Caco-2 (cell line): ENCODE measurements at regions of chr17 and their contacts with region 1.

Region 1: DNA sequence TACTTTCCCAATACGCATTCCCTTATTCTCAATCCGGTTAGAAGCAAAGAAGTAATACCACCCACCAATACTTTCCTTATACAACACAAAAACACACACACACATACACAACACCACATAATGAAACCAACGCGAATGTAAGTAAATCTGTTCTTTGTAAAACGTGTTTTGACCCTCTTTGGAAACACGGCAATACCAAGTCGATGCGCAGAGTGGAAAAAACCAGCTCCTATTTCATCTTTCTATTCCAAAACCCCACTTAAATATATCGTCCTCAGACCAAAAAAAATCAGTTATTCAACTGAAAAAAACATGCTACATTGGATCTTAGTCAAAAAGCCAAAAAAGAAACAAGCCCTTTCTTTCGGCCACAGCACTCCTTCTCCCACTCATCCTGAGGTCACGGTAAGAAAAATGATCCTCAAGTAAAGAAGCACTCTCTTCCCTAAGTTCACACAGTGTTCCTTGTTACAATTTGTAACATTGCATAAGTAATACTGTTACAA is 31.0 kb upstream of the ARL4D start:
- DNase-seq: peak; percentile 79 to 80
- H3K4me3 ChIP-seq: peak overlapping the region; percentile 15; the same call in 1 of the 2 replicates
- H3K4me3 Mint-ChIP-seq: peak overlapping the region; percentile 90
- H3K27ac Mint-ChIP-seq: peak overlapping the region; percentile 100
- H3K4me1 ChIP-seq: peaks cover 31% of the 10 kb centered on the region
- H3K4me1 Mint-ChIP-seq: peaks cover 43% of the 10 kb centered on the region
- H3K27me3 ChIP-seq: no peaks in the 10 kb centered on the region
- H3K27me3 Mint-ChIP-seq: peaks cover 4% of the 10 kb centered on the region
- CTCF ChIP-seq: no peak

Region 2: DNA sequence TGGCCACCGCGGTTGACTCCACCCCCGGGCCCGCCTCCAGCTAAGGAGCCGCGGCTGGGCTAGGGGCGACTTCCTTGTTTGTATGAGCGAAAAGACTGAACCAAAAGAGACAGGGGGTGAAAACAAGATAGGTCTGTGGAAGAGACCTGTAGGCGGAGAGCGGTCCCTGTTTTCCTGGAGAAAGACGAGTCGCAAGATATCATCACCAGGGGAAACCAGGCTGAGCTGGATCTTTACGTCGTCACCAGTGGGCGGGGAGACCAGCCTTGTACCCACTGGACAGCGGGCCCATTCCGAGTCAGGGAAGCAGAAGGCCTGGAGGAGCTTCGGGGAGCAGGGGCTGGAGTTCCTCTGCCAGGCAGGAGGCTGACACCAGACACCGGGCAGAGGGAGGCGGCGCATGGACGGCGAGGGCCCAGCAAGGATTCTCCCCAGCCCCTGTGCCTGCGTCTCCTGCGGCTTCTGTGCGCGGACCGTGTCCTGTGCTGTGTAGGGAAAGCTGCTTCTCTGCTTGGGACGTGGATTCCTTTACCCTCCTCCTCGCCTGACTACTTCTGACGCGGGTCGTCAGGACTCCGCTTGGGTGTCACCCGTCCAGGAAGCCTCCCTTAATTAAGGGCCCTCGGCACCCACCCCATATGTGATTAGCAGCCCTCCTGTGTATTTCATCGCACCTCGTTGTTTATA is 20.7 kb after region 1 on chr17:
- CTCF ChIA-PET with region 1: interaction called, 46 read pairs
- POLR2A ChIA-PET with region 1: interaction called, 224 read pairs
- intact Hi-C with region 1: loop called (anchors 1 kb)
- DNase-seq: peak; percentile 93 to 96
- H3K4me3 ChIP-seq: peak overlapping the region; percentile 72
- H3K4me3 Mint-ChIP-seq: peak overlapping the region; percentile 87
- H3K27ac Mint-ChIP-seq: peak overlapping the region; percentile 96
- H3K4me1 ChIP-seq: peaks cover 19% of the 10 kb centered on the region; the same call in 1 of the 2 replicates
- H3K4me1 Mint-ChIP-seq: peaks cover 25% of the 10 kb centered on the region
- H3K27me3 ChIP-seq: no peaks in the 10 kb centered on the region
- H3K27me3 Mint-ChIP-seq: no peaks in the 10 kb centered on the region
- CTCF ChIP-seq: no peak

Region 3: DNA sequence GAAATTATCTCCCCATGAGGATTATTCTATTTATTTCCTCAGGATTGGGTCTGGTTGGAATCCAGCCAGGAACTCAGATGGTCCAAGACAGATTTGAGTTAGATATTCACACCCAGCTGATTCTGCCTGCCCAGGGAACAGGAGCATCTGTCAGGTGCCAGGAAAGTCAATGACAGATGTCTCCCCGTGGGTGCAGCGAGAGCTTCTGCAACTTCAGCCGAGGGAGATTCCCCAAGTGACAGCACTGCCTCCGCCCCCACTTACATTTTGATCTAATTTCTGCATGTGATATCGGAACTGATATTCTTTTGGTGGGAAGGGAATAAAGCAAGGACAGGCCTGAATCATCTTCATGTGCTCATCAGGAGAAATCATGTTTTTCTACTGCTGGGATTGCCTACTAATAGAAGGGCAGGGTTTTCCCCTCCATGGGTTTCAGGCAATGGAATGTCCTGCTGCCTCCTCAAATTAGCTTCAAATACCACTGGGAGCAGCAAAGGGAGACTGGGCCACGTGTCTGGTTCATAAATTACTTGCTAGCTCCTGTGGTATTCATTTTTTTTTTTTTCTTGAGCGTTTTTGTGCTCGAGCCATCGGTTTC is 100.3 kb after region 1 on chr17:
- CTCF ChIA-PET with region 1: no interaction called
- POLR2A ChIA-PET with region 1: interaction called, 10 read pairs
- intact Hi-C with region 1: no loop called
- DNase-seq: no peak
- H3K4me3 ChIP-seq: no peak overlapping the region
- H3K4me3 Mint-ChIP-seq: no peak overlapping the region
- H3K27ac Mint-ChIP-seq: peak overlapping the region; percentile 39
- H3K4me1 ChIP-seq: peaks cover 27% of the 10 kb centered on the region
- H3K4me1 Mint-ChIP-seq: peaks cover 20% of the 10 kb centered on the region
- H3K27me3 ChIP-seq: no peaks in the 10 kb centered on the region
- H3K27me3 Mint-ChIP-seq: no peaks in the 10 kb centered on the region
- CTCF ChIP-seq: no peak

Region 4: DNA sequence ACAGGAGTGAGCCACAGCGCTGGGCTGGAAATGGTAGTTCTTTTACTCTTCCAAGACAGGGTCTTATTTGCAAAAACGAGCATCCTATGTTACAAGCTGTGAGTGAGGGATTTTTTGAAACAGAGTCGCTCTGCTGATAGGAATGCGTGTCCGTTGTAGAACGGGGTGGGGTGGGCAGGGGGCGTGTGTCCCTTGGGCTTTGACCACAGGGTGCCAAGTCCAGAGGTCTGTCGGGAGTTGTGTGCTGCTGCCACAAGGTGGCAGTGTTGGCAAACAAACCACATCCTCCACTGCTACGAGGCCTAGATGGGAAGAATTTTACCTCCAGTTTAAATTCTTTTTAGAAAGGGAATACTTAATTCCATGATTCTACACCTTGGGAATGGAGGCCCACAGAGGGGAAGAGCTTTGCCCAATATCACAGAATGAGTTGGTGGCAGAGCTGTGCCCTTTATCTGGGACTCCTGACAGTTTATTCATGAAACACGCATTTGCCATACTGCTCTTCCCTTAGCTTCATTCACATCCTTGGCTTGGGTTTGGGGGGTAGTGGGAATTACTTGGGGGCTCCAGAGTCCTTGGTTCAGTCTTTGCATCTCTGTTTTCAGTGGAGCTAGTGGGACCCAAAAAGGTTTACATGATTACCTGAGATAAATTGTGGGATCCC is 208.9 kb after region 1 on chr17:
- CTCF ChIA-PET with region 1: no interaction called
- POLR2A ChIA-PET with region 1: no interaction called
- intact Hi-C with region 1: no loop called
- DNase-seq: peak; percentile 86 to 88
- H3K4me3 ChIP-seq: no peak overlapping the region
- H3K4me3 Mint-ChIP-seq: no peak overlapping the region
- H3K27ac Mint-ChIP-seq: peak overlapping the region; percentile 92
- H3K4me1 ChIP-seq: peaks cover 78% of the 10 kb centered on the region
- H3K4me1 Mint-ChIP-seq: peaks cover 66% of the 10 kb centered on the region
- H3K27me3 ChIP-seq: no peaks in the 10 kb centered on the region
- H3K27me3 Mint-ChIP-seq: no peaks in the 10 kb centered on the region
- CTCF ChIP-seq: peak; percentile 95 to 98

Region 5: DNA sequence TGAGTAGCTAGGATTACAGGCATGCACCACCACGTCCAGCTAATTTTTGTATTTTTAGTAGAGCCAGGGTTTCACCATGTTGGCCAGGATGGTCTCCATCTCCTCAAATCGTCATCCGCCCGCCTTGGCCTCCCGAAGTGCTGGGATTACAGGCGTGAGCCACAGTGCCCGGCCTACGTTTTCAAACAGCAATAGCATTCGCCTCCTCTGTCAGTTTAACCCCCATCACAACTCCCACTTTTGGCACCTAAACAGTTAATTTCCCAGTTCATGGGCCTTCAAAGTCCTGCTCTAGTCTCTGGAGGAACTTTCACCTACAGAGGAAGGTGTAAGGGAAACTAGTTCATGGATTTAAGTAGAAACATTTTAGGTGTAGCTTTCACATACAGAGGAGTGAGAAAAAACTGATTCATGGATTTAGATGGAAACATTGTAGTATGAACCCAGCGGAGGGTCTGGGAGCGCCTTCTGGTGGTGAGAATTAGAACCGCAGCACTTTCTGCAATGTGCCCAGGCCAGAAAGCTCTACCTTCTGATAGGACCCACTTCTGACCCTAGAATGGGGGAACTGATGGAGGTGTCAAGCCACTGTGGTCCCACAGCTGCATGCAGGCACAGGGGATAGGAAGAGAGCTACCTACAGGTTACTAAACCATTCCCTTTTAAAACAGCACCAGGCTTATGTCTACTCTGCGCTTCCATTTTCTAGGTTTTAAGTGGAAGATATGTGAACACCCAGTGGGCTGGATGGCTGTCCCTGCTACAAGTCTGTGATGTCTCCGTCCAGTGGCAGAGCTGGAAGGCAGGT is 305.9 kb after region 1 on chr17:
- CTCF ChIA-PET with region 1: interaction called, 3 read pairs
- POLR2A ChIA-PET with region 1: interaction called, 10 read pairs
- intact Hi-C with region 1: no loop called
- DNase-seq: peak; percentile 78 to 86
- H3K4me3 ChIP-seq: no peak overlapping the region
- H3K4me3 Mint-ChIP-seq: no peak overlapping the region
- H3K27ac Mint-ChIP-seq: peak overlapping the region; percentile 90
- H3K4me1 ChIP-seq: peaks cover 75% of the 10 kb centered on the region
- H3K4me1 Mint-ChIP-seq: peaks cover 71% of the 10 kb centered on the region
- H3K27me3 ChIP-seq: no peaks in the 10 kb centered on the region
- H3K27me3 Mint-ChIP-seq: no peaks in the 10 kb centered on the region
- CTCF ChIP-seq: peak; percentile 94 to 97